Psoas muscle (tissue), 8 donors: ENCODE measurements at regions of chr21 and their contacts with region 1.

Region 1: GRCh38 chr21:41045534-41046268 is 122.3 kb upstream of the BACE2 start:
- DNase-seq: no peak
- ATAC-seq: no peak
- H3K4me3 ChIP-seq: no peak overlapping the region
- H3K27ac ChIP-seq: no peak overlapping the region
- H3K4me1 ChIP-seq: no peaks in the 10 kb centered on the region
- H3K27me3 ChIP-seq: no peaks in the 10 kb centered on the region
- CTCF ChIP-seq: no peak

Region 2: DNA sequence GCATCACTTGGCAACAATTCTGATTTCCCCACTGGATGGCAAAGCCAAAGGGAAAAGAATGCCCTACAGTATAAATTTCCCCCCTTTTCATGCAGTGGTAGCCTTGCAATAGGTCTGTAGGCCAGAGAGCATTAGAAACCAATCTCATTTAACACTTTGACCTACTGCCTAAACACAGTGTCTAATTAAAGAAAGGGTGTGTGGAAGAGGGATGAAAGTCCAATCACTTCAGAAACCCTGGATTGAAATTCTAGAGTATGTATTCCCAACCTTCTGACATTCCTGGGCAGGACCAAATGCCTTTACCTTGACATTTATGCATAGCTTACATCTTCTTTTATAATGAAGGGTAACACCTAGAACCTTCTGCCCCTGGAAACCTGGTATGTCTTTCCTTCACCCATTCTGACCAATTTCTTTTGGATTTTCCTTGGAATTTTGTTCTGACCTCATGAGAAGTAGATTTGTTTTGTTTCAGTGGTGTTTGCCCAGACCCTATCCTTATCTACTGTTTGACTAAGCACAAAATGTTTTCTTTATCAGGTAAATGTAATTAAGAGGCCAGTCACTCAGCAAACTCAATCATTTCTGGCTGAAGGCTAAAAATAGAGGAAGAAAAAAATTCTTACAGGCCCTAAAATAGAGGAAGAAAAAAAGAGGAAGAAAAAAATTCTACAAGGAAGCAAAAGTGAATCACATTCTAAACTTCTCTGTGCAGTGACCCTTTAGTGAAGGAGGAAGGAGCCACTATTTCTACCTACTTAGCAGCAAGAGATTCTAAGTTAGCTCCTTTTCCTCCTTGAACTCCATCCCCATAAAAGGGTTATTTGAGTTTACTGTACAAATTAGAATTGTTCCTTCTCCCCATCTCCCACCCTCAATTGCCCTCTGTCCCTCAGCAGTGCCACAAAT is 69.2 kb before region 1 on chr21:
- intact Hi-C with region 1: no loop called
- DNase-seq: no peak
- ATAC-seq: no peak
- H3K4me3 ChIP-seq: no peak overlapping the region
- H3K27ac ChIP-seq: no peak overlapping the region
- H3K4me1 ChIP-seq: no peaks in the 10 kb centered on the region
- H3K27me3 ChIP-seq: no peaks in the 10 kb centered on the region
- CTCF ChIP-seq: no peak

Region 3: DNA sequence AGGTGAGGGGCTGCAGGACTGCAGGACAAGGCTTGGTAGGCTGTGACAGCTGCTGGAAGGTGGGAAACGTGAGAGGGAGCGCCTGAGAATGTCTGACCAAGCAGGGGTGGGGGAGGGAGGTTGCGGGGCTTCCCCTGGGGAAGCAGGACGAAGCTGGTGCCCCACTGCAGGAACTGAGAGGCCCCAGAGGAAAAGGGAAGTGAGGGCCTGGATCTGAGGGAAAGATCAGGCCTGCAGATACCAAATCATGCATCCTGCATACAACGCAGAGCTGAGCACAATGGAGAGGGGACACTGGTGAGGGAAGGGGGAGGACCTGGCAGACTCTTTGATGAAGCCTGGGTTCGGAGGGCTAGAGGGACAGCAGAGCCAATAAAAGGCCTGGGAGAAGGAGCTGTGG is 56.6 kb after region 1 on chr21:
- intact Hi-C with region 1: loop called in 1 of 2 experiments (anchors 10 kb)
- DNase-seq: no peak
- ATAC-seq: no peak
- H3K4me3 ChIP-seq: no peak overlapping the region
- H3K27ac ChIP-seq: no peak overlapping the region
- H3K4me1 ChIP-seq: no peaks in the 10 kb centered on the region
- H3K27me3 ChIP-seq: peaks cover 0 to 7% (median 0%) of the 10 kb centered on the region in 3 donors
- CTCF ChIP-seq: no peak